Mammary epithelial cell (primary cell): ENCODE measurements at regions of chr15 and their contacts with region 1.

Region 1: GRCh38 chr15:70512772-70513362 is 250.5 kb downstream of the UACA start:
- DNase-seq: peak; percentile 59
- H3K4me3 ChIP-seq: no peak overlapping the region
- H3K27ac ChIP-seq: no peak overlapping the region
- H3K4me1 ChIP-seq: peaks cover 18% of the 10 kb centered on the region
- H3K27me3 ChIP-seq: peaks cover 9% of the 10 kb centered on the region
- CTCF ChIP-seq: peak; percentile 94 to 96

Region 2: GRCh38 chr15:70339681-70340493 is 173.0 kb before region 1 on chr15:
- CTCF ChIA-PET with region 1: no interaction called
- dilution Hi-C with region 1: no loop called
- in situ Hi-C with region 1: no loop called
- intact Hi-C with region 1: no loop called
- DNase-seq: no peak
- H3K4me3 ChIP-seq: no peak overlapping the region
- H3K27ac ChIP-seq: no peak overlapping the region
- H3K4me1 ChIP-seq: no peaks in the 10 kb centered on the region
- H3K27me3 ChIP-seq: peaks cover 9% of the 10 kb centered on the region
- CTCF ChIP-seq: no peak

Region 3: DNA sequence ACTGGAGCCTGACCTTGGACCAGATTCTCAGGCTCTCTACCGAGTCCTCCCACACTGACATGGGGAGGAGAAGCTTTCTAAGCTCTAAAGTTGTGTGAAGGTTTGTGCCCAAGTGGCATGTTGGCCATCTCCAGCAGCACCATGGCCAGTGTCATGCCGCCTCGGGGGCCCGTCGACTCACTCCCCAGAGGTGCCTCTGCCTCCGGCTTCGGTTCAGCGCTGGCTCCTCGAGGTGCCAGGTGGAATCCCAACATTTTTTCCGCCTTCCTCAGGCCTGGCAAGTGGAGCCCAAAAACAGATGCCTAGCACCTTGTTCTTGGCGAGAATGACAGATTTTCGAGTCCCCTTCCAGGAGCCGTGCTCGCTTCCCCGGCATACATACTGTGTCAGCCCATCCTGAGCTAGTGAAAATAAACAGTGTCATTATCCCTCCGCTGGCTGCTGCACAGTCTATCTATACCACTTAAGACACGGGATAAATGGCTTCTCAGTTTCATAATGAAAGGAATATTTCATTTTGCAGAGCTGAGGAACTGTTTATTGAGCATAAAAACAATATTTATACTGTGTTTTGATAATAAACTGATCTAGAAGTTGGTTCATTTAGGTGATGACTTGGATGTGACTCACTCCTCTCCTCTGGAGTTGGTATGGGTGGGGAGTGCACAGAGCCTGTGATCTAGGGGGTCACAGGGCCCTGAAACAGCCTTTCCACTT is 86.6 kb before region 1 on chr15:
- CTCF ChIA-PET with region 1: no interaction called
- dilution Hi-C with region 1: loop called (anchors 5 kb)
- in situ Hi-C with region 1: no loop called
- intact Hi-C with region 1: no loop called
- DNase-seq: peak; percentile 52
- H3K4me3 ChIP-seq: no peak overlapping the region
- H3K27ac ChIP-seq: no peak overlapping the region
- H3K4me1 ChIP-seq: peaks cover 31% of the 10 kb centered on the region
- H3K27me3 ChIP-seq: no peaks in the 10 kb centered on the region
- CTCF ChIP-seq: no peak